Posterior cingulate gyrus (tissue), 11 donors: ENCODE measurements at regions of chr19 and their contacts with region 1.

Region 1: DNA sequence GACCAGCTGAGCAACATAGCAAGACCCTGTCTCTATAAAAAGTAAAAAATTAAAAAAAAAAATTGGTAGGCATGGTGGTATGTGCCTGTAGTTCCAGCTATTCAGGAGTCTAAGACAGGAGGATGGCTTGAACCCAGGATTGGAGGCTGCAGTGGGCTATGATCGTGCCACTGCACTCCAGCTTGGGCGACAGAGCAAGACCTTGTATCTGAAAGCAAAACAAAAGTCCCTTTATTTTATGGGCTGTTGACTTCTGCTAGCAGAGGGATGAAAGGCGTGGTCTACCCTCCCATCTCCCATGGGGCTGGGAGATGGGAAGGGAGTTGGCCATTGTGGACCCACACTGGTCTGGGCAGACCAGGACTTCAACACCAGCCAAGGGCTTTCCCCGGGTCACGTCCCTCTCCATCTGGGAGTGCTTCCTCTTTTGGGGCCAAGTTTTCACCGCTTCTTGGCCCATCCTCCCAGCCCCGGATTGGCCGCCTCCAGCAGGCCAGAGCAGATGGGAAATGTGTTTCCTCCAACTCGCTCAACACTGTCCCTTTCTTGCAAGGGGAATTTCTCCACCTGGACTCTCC is 2.2 kb upstream of the TNFSF9 start:
- DNase-seq: peak; percentile 35 to 95 (median 57)

Region 2: DNA sequence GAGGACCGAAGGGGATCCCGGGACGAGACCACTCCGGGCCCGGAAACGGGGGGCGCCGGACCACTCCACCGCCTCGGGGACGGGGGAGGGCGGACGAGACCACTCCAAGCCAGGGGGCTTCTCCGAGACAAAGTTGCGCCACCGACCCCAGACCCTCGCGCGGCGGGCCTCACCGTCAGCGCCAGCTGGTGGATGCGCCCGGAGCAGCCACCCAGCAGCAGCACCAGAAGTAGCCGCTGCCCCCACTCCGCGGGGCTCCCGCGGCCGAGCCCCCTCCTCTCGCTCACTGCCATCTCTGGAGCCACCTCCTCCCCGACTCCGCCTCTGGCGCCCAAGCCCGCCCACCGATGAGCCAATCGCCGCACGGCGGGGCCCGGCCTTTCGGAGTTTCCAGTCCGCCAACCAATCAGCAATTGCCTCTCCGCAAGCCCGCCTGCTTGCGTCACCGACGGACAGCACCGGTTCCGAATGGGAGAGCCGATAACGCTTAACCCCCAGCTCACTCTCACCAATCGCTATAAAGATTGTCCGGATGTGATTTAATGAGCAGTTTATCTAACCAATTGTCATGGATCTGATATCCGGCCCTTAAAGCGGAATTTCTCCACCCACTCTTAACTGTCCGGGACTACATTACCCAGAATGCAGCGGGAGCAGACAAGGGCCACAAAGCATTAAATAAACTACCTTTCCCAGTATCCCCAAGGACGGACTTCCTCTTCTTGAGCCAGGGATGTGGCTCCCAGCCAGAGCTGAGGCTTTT is 208.8 kb after region 1 on chr19 and contains the start of gene GPR108:
- intact Hi-C with region 1: loop called (anchors 5 kb)
- DNase-seq: peak; percentile 100